ENCODE measurements at regions of chr1 and their contacts with region 1.

Region 1: GRCh38 chr1:244599937-244600350 is 53.0 kb upstream of the DESI2 start:
- DNase-seq: peak; percentile 54
- H3K4me3 Mint-ChIP-seq: peak overlapping the region; percentile 79
- H3K27ac Mint-ChIP-seq: peak overlapping the region; percentile 94
- H3K4me1 Mint-ChIP-seq: peaks cover 22% of the 10 kb centered on the region
- H3K27me3 Mint-ChIP-seq: peaks cover 9% of the 10 kb centered on the region

Region 2: GRCh38 chr1:243421784-243422183 is 1178.2 kb before region 1 on chr1:
- intact Hi-C with region 1: loop called (anchors 5 kb)
- DNase-seq: peak; percentile 52
- H3K4me3 Mint-ChIP-seq: peak overlapping the region; percentile 61
- H3K27ac Mint-ChIP-seq: peak overlapping the region; percentile 57
- H3K4me1 Mint-ChIP-seq: peaks cover 44% of the 10 kb centered on the region
- H3K27me3 Mint-ChIP-seq: no peaks in the 10 kb centered on the region

Region 3: DNA sequence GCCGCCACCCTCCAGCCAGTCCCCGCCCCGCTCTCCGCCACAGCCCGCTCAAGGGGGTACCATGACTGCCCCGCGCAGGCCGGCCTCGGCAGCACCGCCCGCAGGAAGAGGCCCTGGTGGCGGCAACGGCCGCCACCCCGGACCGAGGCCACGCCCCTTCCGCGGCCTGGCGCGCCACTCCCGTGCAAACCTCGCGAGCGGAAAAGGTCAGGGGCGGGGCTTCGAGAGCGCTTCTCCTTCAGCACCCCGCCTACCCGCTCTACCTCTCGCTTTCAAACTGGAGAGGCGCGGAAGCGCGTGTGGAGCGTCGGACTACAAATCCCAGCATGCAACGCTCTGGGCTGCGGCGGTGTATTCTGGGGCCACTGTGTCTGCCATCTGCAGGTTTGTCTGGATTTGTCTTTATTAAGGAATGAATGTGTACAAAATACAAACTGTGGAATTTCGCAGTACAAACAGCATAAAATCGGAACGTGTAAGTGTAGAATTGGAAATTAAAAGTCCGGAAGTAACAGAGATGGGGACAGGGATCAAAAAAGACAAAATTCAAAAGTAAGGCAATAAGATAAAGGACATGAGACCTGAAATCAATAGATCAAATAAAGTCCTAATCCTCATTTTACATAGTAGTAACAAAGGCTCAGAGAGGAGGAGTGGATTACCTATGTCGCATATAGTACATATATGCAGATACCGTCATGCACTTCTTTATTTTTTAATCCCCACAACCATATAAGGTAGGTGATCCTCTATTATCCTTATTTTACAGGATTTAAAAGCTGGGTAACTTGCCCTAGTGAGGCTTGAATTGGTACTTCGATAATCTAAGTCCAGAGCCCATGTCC is 147.8 kb before region 1 on chr1:
- intact Hi-C with region 1: loop called (anchors 2 kb)
- DNase-seq: peak; percentile 98
- H3K4me3 Mint-ChIP-seq: peak overlapping the region; percentile 95
- H3K27ac Mint-ChIP-seq: peak overlapping the region; percentile 96
- H3K4me1 Mint-ChIP-seq: peaks cover 41% of the 10 kb centered on the region
- H3K27me3 Mint-ChIP-seq: no peaks in the 10 kb centered on the region

Region 4: GRCh38 chr1:244801246-244801645 is 201.3 kb after region 1 on chr1:
- intact Hi-C with region 1: loop called (anchors 1 kb)
- DNase-seq: peak; percentile 6
- H3K4me3 Mint-ChIP-seq: no peak overlapping the region
- H3K27ac Mint-ChIP-seq: no peak overlapping the region
- H3K4me1 Mint-ChIP-seq: peaks cover 8% of the 10 kb centered on the region
- H3K27me3 Mint-ChIP-seq: peaks cover 14% of the 10 kb centered on the region

Region 5: DNA sequence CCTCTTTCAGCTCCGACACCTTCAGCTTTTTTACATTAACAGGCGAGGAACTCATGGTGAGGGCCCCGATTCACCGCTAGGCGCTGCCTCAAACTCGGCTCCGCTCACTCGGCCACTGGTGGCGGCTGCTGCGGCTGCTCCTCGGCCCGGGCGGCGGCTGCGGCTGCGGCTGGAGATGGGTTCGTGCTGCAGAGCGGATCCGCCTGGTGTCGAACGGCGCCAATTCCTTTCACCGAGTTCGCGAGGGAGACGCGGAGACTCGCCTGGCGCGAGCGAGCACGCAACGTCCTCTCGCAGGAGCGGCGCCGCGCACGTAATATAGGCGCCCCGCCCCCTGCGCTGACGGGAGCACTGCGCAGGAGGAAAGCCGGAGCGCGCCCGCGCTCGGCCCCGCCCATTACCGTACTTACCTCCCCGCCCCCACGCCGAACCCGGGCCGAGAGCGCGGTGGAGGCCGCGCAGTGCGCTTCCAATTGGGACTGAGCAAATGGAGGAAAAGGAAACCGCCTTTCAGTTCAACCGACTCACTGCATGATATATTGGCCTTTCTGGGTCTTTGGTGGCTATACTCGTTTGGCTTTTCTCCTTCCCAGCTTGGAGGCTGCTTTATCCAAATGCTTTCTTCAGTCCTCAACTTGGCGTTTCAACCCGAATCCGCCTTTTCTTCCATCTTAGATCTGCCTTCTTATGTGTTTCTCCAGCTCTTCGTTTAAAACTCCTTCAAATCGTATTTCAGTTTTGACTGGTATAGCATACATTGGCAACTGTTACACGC is 264.5 kb after region 1 on chr1 and contains the start of gene HNRNPU:
- intact Hi-C with region 1: loop called (anchors 1 kb)
- DNase-seq: peak; percentile 97
- H3K4me3 Mint-ChIP-seq: peak within 1 kb of the TSS; percentile 87
- H3K27ac Mint-ChIP-seq: peak within 1 kb of the TSS; percentile 95
- H3K4me1 Mint-ChIP-seq: peaks cover 41% of the 10 kb centered on the region
- H3K27me3 Mint-ChIP-seq: no peaks in the 10 kb centered on the region
- total RNA-seq, gene HNRNPU: 566 and 573 TPM in 2 replicates

Region 6: GRCh38 chr1:246329900-246330299 is 1730.0 kb after region 1 on chr1:
- intact Hi-C with region 1: loop called (anchors 10 kb)
- DNase-seq: peak; percentile 41
- H3K4me3 Mint-ChIP-seq: peak overlapping the region; percentile 53
- H3K27ac Mint-ChIP-seq: peak overlapping the region; percentile 65
- H3K4me1 Mint-ChIP-seq: peaks cover 50% of the 10 kb centered on the region
- H3K27me3 Mint-ChIP-seq: no peaks in the 10 kb centered on the region

Measured in activated T-helper 1 cell treated with anti-CD3 and anti-CD28 coated beads, Interleukin-12 subunit alpha, Interleukin-12 subunit beta, Interleukin-2, Interleukin-4 antibody, amounts not matched to agents 30 ng/mL and 10 ng/mL and 1 ng/mL, durations not matched to agents 14 hours and 24 hours and 36 hours (primary cell).